GM18951 (cell line): ENCODE measurements at regions of chr1 and their contacts with region 1.

Region 1: GRCh38 chr1:160607011-160607671 is 27.8 kb upstream of the CD84 start:
- POLR2A ChIP-seq: no peak

Region 2: GRCh38 chr1:160098852-160099561 is 508.1 kb before region 1 on chr1:
- in situ Hi-C with region 1: loop called (anchors 25 kb)
- POLR2A ChIP-seq: peak; percentile 44

Region 3: DNA sequence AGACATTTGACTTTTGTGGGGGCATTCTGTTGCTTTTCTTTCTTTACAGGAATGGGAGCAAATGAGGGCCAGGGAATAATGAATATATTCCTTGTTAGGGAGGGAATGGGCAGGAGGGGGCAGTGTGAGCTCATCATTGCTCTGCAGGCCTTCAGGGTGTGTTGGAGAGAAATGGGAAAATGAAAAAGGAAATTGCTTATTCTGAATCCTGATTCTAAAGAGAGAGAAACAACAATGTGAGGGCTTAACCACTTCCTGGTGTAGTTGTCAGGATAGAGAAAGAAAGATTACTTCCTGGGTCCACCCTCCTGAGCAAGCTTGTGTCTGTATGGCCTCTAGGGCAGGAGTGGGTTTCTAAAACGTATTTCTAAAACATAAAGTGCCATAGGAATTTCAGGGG is 178.5 kb before region 1 on chr1:
- in situ Hi-C with region 1: loop called (anchors 5 kb)
- POLR2A ChIP-seq: no peak

Region 4: GRCh38 chr1:160544647-160545046 is 62.5 kb before region 1 on chr1:
- in situ Hi-C with region 1: loop called (anchors 5 kb)
- POLR2A ChIP-seq: no peak

Region 5: DNA sequence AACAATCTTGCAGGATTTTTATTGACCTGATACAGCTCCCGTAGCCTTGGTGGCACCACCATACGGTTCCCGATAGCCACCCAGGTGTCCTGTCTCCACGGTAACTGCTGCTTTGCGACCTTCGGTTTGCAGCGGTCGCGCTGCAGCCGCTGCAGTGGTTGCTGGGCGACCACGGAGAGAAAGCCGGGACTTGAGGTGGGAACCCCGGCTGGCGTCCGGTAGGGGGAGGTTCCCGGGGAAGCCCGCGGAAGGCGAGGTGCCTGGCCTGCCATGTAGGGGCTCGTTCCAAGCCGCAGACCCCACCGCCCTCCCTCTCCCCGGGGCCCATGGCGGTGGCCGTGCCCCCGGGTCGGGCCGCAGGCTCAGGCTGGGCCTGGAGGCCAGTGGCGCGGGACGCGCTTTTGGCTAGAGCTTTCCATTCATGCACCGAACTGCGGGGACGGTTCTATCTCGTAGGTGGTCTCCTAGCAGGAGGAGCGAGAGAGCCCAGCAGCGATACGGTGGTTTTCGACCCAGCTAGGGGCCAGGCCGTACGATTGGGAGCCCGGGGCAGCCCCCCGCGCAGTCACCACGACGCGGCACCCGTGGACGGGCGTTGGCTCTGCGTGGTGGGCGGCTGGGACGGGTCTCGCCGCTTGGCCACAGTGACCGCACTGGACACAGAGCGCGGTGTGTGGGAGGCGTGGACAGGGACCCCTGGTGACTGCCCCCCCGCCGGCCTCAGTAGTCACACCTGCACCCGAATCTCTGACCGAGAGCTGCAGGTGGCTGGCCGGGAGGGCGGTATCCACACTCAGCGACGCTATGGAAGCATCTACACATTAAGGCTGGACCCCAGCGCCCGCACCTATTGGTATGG is 491.3 kb after region 1 on chr1 and contains the start of gene KLHDC9:
- in situ Hi-C with region 1: no loop called
- POLR2A ChIP-seq: peak; percentile 47